ENCODE measurements at regions of chr3 and their contacts with region 1.

Region 1: GRCh38 chr3:52220380-52221026 is 4.9 kb downstream of the TLR9 start:
- DNase-seq: peak; percentile 54
- ATAC-seq: peak; percentile 72
- H3K4me3 ChIP-seq: no peak overlapping the region
- H3K27ac ChIP-seq: no peak overlapping the region
- H3K4me1 ChIP-seq: peaks cover 21 to 42% of the 10 kb centered on the region in 2 experiments
- H3K27me3 ChIP-seq: no peaks in the 10 kb centered on the region
- CTCF ChIP-seq: peak in 2 of 3 experiments; percentile 94 to 95; a peak in 4 of 6 replicates
- POLR2A ChIP-seq: no peak
- RAD21 ChIP-seq: no peak

Region 2: DNA sequence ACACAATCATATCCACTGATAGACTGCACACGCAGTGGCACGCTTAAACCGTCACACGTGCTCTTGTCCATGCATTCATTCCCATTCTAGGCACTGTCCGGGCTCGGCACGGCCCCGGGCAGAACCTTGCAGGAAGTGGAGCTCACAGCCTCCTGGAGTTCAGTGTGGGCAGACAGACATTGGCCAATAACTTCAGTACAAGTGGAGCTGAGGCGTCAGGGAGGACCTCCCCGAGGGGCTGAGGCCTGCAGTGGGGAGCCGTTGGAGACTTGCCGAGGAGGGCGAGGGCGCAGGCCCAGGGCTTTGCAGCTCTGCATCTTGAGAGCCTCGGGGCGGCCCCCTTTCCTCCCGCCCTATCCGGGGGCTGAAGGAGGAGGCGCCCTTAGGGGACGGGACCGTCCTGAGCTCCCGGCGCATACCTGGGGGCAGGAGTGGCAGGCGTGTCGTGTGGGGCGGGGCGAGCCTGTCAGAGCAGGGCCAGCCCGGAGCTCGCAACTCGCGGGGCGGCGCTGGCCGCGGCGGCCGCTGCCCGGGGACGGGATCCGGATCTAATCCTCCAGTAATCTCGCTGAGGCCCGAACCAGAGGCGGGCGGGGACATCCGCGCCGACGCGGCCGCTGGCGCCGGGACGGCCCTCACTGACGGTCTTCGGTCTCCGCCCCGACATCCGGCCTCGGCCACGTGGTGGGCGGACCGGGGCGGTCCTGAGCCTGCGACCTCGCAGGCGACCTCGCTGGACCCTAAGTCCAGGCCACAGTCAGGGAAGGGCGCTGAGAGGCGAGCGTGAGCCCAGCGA is 237.5 kb before region 1 on chr3 and contains the start of gene ACY1:
- CTCF ChIA-PET with region 1: no interaction called
- POLR2A ChIA-PET with region 1: no interaction called
- RAD21 ChIA-PET with region 1: no interaction called
- intact Hi-C with region 1: no loop called
- DNase-seq: peak; percentile 57
- ATAC-seq: peak; percentile 89
- H3K4me3 ChIP-seq: peak within 1 kb of the TSS; percentile 75 to 86
- H3K27ac ChIP-seq: peak within 1 kb of the TSS; percentile 82
- H3K4me1 ChIP-seq: peaks cover 24 to 56% of the 10 kb centered on the region in 2 experiments
- H3K27me3 ChIP-seq: no peaks in the 10 kb centered on the region
- CTCF ChIP-seq: no peak
- POLR2A ChIP-seq: peak; percentile 18
- RAD21 ChIP-seq: no peak
- total RNA-seq, gene ACY1: 73.2 TPM

Region 3: DNA sequence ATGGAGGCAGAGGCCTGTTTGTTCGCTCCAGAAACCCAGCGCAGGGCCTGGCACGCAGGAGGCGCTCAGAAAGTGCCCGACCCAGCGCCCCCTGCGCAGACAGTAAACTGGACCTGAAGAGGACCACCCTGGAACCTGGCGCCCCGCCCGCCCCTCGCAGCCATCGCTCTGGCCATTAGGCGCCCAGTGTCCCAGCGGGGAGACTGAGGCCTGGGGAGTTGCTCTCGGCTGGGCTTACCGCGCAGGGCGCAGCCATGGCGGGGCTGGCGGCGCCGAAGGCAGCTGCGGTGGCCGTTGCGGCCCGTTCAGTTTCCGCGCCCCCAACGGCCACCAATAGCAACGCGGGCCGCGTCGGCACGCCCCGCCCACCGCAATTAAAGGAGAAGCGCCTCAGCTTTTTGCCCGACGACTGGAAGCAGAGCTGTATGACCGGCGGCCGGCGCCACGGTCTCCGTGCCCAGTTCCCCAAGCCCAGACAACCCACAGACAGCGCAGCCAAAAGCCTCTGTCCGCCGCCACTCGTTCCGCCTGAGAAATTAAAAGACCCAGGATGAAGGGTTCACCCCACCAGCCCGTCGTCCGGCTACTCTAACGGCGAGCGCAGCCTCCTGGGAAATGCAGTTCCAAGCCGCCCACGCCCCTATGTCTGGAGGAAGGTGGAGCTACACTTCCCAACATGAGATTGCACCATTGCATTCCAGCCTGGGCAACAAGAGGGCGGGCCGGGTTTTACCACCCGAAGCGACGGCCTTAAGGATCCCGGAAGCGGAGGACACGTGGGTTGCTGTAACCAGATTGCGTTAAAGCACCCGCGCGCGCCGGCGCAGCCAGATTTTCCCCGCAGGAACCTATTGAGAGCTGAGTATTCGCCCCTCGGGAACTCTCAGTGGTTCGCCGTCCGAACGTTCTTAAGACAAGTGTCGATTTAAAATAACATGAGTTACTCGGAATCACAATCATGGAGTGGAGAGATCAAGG is 66.1 kb before region 1 on chr3 and contains the start of gene POC1A:
- CTCF ChIA-PET with region 1: interaction called, 7 read pairs
- POLR2A ChIA-PET with region 1: interaction called, 5 read pairs
- RAD21 ChIA-PET with region 1: no interaction called
- intact Hi-C with region 1: loop called (anchors 5 kb)
- DNase-seq: peak; percentile 97
- ATAC-seq: peak; percentile 89
- H3K4me3 ChIP-seq: peak within 1 kb of the TSS; percentile 86 to 92
- H3K27ac ChIP-seq: peak within 1 kb of the TSS; percentile 62
- H3K4me1 ChIP-seq: peaks cover 8 to 30% of the 10 kb centered on the region in 2 experiments
- H3K27me3 ChIP-seq: no peaks in the 10 kb centered on the region
- CTCF ChIP-seq: no peak
- POLR2A ChIP-seq: peak; percentile 59
- RAD21 ChIP-seq: no peak
- total RNA-seq, gene POC1A: 34.0 TPM

Region 4: GRCh38 chr3:52208556-52208955 is 11.9 kb before region 1 on chr3:
- CTCF ChIA-PET with region 1: interaction called, 10 read pairs
- POLR2A ChIA-PET with region 1: interaction called, 7 read pairs
- RAD21 ChIA-PET with region 1: no interaction called
- intact Hi-C with region 1: no loop called
- DNase-seq: no peak
- ATAC-seq: no peak
- H3K4me3 ChIP-seq: no peak overlapping the region
- H3K27ac ChIP-seq: no peak overlapping the region
- H3K4me1 ChIP-seq: no peaks in the 10 kb centered on the region
- H3K27me3 ChIP-seq: no peaks in the 10 kb centered on the region
- CTCF ChIP-seq: no peak
- POLR2A ChIP-seq: no peak
- RAD21 ChIP-seq: no peak

Region 5: DNA sequence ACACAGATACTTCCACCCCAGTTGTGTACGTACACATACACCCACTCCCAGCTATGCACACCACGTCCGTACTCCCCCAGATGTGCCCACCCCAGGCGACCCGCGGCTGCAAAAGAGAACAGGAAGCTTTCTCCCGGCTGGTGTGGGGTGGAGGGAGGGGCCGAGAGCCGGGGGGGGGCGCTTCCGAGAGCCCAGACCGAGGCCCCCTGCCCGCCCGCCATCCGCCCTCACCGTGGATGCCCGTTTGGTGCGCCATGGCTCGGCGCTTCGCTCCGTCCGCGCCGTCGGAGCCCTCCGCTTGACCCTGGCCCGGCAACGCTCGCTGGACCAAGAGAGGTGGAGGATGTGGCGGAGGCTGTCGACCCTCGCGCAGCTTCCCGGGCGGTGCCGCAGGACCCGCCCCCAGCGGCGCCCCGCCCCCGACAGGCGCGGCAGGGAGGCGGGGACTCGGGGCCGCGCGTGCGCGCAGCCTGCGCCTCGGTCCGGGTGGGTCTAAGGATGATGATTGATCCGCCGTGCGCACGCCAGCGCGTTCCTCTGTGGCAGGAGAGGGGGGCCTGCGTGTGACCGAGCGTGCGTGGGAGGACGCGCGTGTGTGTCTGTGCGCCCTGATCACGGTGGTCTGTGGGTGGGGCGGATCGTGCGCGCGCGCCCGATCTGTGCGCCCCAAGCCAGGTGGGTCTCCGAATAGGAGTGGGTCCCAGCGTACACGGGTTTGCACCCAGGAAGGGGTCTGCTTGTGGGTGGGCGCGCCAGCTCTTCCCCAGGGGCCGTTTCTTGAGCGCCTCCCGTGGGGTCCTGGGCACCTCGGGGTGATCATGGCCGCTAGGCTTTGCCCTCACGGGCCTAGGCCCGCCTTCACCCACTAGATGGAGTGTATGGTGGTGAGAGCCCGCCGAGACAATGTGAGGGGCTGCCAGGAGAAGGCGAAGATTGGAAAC is 18.5 kb after region 1 on chr3 and contains the start of gene TWF2:
- CTCF ChIA-PET with region 1: interaction called, 18 read pairs
- POLR2A ChIA-PET with region 1: interaction called, 6 read pairs
- RAD21 ChIA-PET with region 1: interaction called, 3 read pairs
- intact Hi-C with region 1: no loop called
- DNase-seq: peak; percentile 31
- ATAC-seq: peak; percentile 76
- H3K4me3 ChIP-seq: peak within 1 kb of the TSS; percentile 87 to 93
- H3K27ac ChIP-seq: peak within 1 kb of the TSS; percentile 98
- H3K4me1 ChIP-seq: peaks cover 38 to 47% of the 10 kb centered on the region in 2 experiments
- H3K27me3 ChIP-seq: no peaks in the 10 kb centered on the region
- CTCF ChIP-seq: peak in 2 of 3 experiments; percentile 38 to 50; a peak in 3 of 6 replicates
- POLR2A ChIP-seq: peak; percentile 79
- RAD21 ChIP-seq: no peak
- total RNA-seq, gene TWF2: 100 TPM

Region 6: GRCh38 chr3:52385157-52385556 is 164.7 kb after region 1 on chr3:
- CTCF ChIA-PET with region 1: interaction called, 18 read pairs
- POLR2A ChIA-PET with region 1: no interaction called
- RAD21 ChIA-PET with region 1: no interaction called
- intact Hi-C with region 1: no loop called
- DNase-seq: peak; percentile 64
- ATAC-seq: peak; percentile 97
- H3K4me3 ChIP-seq: no peak overlapping the region
- H3K27ac ChIP-seq: peak overlapping the region; percentile 9; the same call in 1 of the 2 replicates
- H3K4me1 ChIP-seq: peaks cover 6 to 11% of the 10 kb centered on the region in 2 experiments; a peak in 3 of 4 replicates
- H3K27me3 ChIP-seq: no peaks in the 10 kb centered on the region
- CTCF ChIP-seq: peak; percentile 91 to 99 (median 98)
- POLR2A ChIP-seq: no peak
- RAD21 ChIP-seq: peak; percentile 86

Measured in HCT116 (cell line).